ENCODE measurements at regions of chr2 and their contacts with region 1.

Region 1: GRCh38 chr2:28716265-28716867 is 35.3 kb upstream of the PPP1CB start:
- DNase-seq: peak; percentile 32 to 61
- ATAC-seq: peak; percentile 75 to 86 (median 80)
- H3K4me3 ChIP-seq: no peak overlapping the region
- H3K27ac ChIP-seq: peak overlapping the region; percentile 94
- H3K4me1 ChIP-seq: peaks cover 15% of the 10 kb centered on the region
- H3K27me3 ChIP-seq: no peaks in the 10 kb centered on the region
- CTCF ChIP-seq: no peak

Region 2: DNA sequence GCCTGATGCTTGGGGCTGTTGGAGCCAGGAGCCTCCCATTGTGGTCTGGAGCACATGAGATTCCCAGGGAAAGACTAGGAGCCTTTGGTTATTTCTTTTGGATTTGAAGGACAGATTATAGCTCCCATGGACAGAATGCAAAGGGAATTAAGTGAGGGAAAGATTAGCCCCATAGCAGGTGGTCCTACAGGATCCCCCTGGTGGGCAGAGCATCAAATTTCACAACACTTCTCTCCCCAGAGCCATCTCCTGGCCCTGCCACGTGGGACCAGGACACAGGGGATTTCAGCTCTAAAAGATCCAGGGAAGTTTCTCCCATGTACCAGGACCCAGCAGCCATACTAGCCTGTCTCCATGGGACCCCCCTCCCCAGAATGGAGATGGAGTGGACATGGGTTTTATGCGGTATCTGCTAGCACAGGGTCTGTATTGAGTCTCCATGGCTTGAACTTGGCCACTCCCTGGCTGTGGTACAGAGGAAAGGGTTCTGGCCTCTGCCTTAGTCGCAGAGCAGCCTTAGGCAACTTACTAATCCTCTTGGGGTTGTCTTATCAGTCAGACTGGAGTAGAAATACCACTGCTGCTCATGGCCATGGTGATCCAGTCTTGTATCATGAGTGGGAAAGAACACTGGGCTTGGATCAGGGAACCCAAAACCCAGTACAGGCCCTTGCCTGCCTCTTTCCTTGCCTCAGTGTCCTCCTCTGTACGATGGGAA is 227.3 kb before region 1 on chr2:
- intact Hi-C with region 1: no loop called
- DNase-seq: no peak
- ATAC-seq: no peak
- H3K4me3 ChIP-seq: no peak overlapping the region
- H3K27ac ChIP-seq: no peak overlapping the region
- H3K4me1 ChIP-seq: no peaks in the 10 kb centered on the region
- H3K27me3 ChIP-seq: no peaks in the 10 kb centered on the region
- CTCF ChIP-seq: no peak

Region 3: GRCh38 chr2:28594289-28595108 is 121.9 kb before region 1 on chr2:
- intact Hi-C with region 1: loop called in 1 of 2 experiments (anchors 10 kb)
- DNase-seq: peak; percentile 87 to 92
- ATAC-seq: peak; percentile 86 to 92 (median 90)
- H3K4me3 ChIP-seq: peak overlapping the region; percentile 11
- H3K27ac ChIP-seq: peak overlapping the region; percentile 87
- H3K4me1 ChIP-seq: peaks cover 27% of the 10 kb centered on the region
- H3K27me3 ChIP-seq: no peaks in the 10 kb centered on the region
- CTCF ChIP-seq: peak; percentile 84

Region 4: DNA sequence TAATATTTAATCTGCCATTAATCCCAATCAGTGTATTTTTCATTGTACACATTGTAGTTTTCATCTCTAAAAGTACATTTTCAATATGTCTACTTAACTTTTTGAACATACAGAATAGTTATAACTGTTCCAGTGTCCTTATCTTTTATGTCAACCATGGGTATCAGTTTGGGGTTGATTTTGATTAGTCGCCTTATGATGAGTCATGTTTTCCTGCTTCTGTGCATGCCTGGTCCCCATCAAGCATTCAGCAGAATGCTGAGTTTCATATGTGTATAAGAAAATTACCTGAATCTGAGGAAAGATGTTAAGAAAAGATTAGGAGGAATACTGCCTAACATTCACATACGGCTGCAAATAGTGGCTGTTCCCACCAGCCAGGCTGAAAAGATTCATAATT is 112.0 kb after region 1 on chr2:
- intact Hi-C with region 1: no loop called
- DNase-seq: no peak
- ATAC-seq: no peak
- H3K4me3 ChIP-seq: no peak overlapping the region
- H3K27ac ChIP-seq: no peak overlapping the region
- H3K4me1 ChIP-seq: no peaks in the 10 kb centered on the region
- H3K27me3 ChIP-seq: no peaks in the 10 kb centered on the region
- CTCF ChIP-seq: no peak